ENCODE measurements at regions of chr5 and their contacts with region 1.

Region 1: DNA sequence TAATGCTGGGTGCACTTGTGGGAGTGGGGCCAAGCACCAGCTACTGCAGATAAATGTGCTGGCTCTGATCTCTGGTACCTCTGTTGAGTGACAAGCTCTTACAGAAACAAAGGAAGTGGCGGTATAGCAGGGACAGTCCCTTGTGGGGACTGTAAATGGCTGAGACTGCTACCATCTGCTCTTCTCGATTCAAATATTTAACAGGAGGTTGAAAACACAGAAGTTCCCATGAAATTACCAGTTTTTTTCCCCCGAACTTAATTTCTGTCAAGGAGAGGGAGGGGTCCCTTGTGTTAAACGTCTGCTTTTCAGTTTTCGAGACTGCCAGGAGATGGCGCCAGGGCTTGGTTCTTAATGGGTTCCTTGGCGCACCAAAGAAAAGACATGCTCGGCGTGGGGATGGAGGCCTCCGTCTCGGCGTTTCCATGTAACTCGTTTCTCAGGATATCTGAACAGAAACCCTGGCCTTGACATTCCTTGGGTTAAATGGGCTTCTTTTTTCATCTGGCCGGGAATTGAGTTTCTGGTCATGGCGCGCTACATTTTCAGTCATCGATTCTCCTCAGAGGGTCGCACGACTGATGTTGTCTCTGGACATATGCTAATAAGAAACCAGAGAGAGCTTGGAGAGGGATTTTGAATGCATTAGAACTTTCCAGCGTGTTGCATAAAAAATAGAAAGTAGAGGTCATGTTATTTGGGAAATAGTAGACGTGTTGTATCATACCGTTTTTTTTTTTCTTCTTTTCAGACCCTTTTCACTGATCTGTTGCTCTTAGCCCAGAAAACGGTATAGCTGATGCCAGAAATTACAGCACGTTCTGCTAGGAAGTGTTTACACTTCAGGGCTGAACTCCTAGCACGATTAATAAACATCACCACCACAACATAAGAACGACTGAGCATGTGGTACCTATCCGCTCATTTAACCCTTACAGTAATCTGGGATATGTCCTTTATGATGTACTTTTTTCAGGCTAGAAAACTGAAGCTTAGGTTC is 64.0 kb downstream of the CARTPT start:
- DNase-seq: peak; percentile 65 to 82
- ATAC-seq: peak; percentile 91

Region 2: DNA sequence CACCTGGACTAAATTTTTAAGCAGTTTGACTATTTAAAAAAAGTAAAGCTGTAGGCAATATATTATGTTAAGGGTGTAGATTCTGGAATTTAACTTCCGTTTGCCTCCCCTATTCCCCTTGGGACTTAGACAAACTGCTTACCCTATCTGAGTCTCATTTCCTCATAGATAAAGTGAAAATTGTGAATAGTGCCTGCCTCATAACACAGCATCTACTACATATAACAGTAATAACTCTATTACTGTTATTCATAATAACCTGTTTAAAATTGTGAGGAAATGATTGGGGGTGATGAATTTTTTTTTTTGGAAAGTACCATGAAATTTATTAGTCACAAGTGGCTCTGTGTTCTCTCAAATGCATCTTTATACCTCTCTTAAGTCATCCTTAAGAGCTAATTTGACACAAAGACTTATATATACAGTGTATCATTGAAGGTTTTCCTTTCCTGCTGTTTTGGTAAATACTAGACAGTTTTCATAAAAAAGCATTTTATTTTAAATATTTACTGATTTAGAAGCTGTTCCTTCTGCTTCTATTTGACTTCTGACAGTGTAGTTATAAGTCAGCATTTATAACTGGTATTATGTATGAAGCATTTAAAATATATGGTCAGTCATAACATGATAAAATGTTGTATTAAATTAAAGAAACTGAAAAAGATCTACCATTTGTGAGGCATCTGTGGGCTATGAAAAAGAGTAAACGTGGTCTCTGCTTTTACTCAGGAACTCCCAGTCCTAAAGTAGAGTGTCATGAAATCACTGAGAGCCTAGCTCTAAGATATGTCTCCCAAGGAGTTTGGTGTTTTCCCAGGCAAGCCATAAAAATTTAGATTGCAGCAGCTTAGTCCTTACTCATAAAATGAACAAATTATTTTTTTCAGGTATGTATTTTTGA is 149.6 kb before region 1 on chr5:
- intact Hi-C with region 1: no loop called
- DNase-seq: no peak
- ATAC-seq: no peak

Region 3: GRCh38 chr5:72018146-72018803 is 235.2 kb after region 1 on chr5:
- intact Hi-C with region 1: loop called in 1 of 2 experiments (anchors 5 kb)
- DNase-seq: peak; percentile 32 to 78
- ATAC-seq: peak; percentile 77

Region 4: GRCh38 chr5:72314571-72315172 is 531.6 kb after region 1 on chr5:
- intact Hi-C with region 1: loop called in 1 of 2 experiments (anchors 5 kb)
- DNase-seq: no peak
- ATAC-seq: peak; percentile 28

Measured in left colon (tissue), 2 donors.